ENCODE measurements at regions of chr4 and their contacts with region 1.

Region 1: GRCh38 chr4:182806259-182807252 is 110.6 kb downstream of the DCTD start:
- DNase-seq: peak; percentile 65 to 79
- ATAC-seq: peak; percentile 53 to 67 (median 64)
- H3K4me3 ChIP-seq: peak overlapping the region; percentile 14
- H3K4me3 Mint-ChIP-seq: peak overlapping the region; percentile 84
- H3K27ac ChIP-seq: peak overlapping the region; percentile 28
- H3K27ac Mint-ChIP-seq: peak overlapping the region; percentile 82 to 96
- H3K4me1 ChIP-seq: peaks cover 33% of the 10 kb centered on the region
- H3K4me1 Mint-ChIP-seq: peaks cover 0 to 6% of the 10 kb centered on the region in 2 donors
- H3K27me3 ChIP-seq: no peaks in the 10 kb centered on the region
- H3K27me3 Mint-ChIP-seq: peaks cover 0 to 4% of the 10 kb centered on the region in 2 donors
- CTCF ChIP-seq: peak; percentile 84

Region 2: GRCh38 chr4:182478475-182478874 is 328.1 kb before region 1 on chr4:
- intact Hi-C with region 1: loop called (anchors 2 kb)
- DNase-seq: peak in 1 of 2 donors; percentile 39
- ATAC-seq: peak in 2 of 3 donors; percentile 44 to 53
- H3K4me3 ChIP-seq: no peak overlapping the region
- H3K4me3 Mint-ChIP-seq: no peak overlapping the region
- H3K27ac ChIP-seq: no peak overlapping the region
- H3K27ac Mint-ChIP-seq: no peak overlapping the region
- H3K4me1 ChIP-seq: no peaks in the 10 kb centered on the region
- H3K4me1 Mint-ChIP-seq: no peaks in the 10 kb centered on the region
- H3K27me3 ChIP-seq: no peaks in the 10 kb centered on the region
- H3K27me3 Mint-ChIP-seq: no peaks in the 10 kb centered on the region
- CTCF ChIP-seq: peak; percentile 69

Region 3: DNA sequence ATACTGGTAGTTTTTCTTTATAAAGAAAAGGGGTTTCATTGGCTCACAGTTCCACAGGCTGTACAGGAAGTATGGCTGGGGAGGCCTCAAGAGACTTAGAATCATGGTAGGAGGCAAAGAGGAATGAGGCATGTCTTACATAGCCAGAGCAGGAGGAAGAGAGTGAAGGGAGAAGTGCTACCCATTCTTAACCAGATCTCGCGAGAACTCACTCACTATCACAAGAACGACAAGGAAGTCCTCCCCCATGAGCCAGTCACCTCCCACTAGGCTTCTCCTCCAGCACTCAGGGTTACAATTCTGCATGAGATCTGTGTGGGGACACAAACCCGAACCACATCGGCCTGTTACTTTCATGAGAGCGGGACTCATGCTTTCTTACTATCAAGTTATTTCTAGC is 322.9 kb before region 1 on chr4:
- intact Hi-C with region 1: loop called (anchors 2 kb)
- DNase-seq: no peak
- ATAC-seq: no peak
- H3K4me3 ChIP-seq: no peak overlapping the region
- H3K4me3 Mint-ChIP-seq: no peak overlapping the region
- H3K27ac ChIP-seq: no peak overlapping the region
- H3K27ac Mint-ChIP-seq: no peak overlapping the region
- H3K4me1 ChIP-seq: no peaks in the 10 kb centered on the region
- H3K4me1 Mint-ChIP-seq: no peaks in the 10 kb centered on the region
- H3K27me3 ChIP-seq: no peaks in the 10 kb centered on the region
- H3K27me3 Mint-ChIP-seq: peaks cover 0 to 4% of the 10 kb centered on the region in 2 donors
- CTCF ChIP-seq: no peak

Region 4: DNA sequence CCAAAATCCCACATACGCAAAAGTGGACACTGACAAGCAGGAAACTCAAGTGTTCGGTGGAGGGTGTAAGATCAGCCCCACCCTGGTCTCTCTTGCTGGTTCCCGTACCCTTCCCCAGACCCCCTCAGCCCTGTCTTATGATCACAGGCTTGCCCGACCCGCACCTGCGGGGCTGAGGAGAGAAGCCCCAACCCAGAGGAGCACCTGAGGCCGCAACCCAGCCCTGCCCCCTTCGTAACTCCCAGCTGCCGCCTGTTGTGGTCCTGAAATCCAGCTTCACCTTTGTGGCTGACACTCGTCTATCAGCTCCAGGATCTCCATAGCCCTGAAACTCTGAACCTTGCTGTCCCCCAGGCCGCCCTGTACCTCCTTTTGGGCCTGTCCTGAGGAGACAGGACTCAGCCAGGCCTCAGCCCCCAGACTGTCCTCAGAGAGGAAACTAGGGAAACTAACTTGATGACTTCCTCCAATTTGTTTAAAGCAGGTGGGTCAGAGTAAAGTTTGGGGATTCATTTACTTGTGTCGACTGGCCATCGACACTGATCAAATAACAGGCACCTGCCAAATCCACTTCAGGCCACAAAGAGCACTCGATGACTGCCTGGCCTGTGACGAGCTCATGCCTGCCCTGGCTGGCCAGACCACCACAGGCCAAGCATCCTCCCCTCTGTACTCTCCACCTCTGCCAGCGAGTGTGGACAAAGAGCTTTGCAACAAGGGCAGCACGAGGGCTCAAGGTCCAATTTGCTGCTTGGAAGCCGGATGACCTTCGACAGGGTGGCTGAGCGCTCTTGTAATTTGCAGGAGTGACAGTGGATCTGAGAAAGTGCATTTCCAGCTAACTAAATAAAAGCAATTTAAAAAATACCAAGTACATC is 91.3 kb after region 1 on chr4:
- intact Hi-C with region 1: no loop called
- DNase-seq: no peak
- ATAC-seq: no peak
- H3K4me3 ChIP-seq: no peak overlapping the region
- H3K4me3 Mint-ChIP-seq: no peak overlapping the region
- H3K27ac ChIP-seq: no peak overlapping the region
- H3K27ac Mint-ChIP-seq: peak overlapping the region in 1 of 2 donors; percentile 14
- H3K4me1 ChIP-seq: no peaks in the 10 kb centered on the region
- H3K4me1 Mint-ChIP-seq: no peaks in the 10 kb centered on the region
- H3K27me3 ChIP-seq: no peaks in the 10 kb centered on the region
- H3K27me3 Mint-ChIP-seq: no peaks in the 10 kb centered on the region
- CTCF ChIP-seq: no peak

Region 5: GRCh38 chr4:182917182-182918043 is 110.9 kb after region 1 on chr4 and contains the start of gene DCTD:
- intact Hi-C with region 1: loop called (anchors 1 kb)
- DNase-seq: peak; percentile 77 to 87
- ATAC-seq: peak; percentile 71 to 86 (median 80)
- H3K4me3 ChIP-seq: peak within 1 kb of the TSS; percentile 86
- H3K4me3 Mint-ChIP-seq: peak within 1 kb of the TSS; percentile 87
- H3K27ac ChIP-seq: peak within 1 kb of the TSS; percentile 100
- H3K27ac Mint-ChIP-seq: peak within 1 kb of the TSS; percentile 90 to 91
- H3K4me1 ChIP-seq: peaks cover 28% of the 10 kb centered on the region
- H3K4me1 Mint-ChIP-seq: peaks cover 44 to 47% of the 10 kb centered on the region in 2 donors
- H3K27me3 ChIP-seq: no peaks in the 10 kb centered on the region
- H3K27me3 Mint-ChIP-seq: no peaks in the 10 kb centered on the region
- CTCF ChIP-seq: no peak
- total RNA-seq, gene DCTD: 57.2 to 68.2 (median 68.1) TPM